ENCODE measurements at regions of chr2 and their contacts with region 1.

Region 1: DNA sequence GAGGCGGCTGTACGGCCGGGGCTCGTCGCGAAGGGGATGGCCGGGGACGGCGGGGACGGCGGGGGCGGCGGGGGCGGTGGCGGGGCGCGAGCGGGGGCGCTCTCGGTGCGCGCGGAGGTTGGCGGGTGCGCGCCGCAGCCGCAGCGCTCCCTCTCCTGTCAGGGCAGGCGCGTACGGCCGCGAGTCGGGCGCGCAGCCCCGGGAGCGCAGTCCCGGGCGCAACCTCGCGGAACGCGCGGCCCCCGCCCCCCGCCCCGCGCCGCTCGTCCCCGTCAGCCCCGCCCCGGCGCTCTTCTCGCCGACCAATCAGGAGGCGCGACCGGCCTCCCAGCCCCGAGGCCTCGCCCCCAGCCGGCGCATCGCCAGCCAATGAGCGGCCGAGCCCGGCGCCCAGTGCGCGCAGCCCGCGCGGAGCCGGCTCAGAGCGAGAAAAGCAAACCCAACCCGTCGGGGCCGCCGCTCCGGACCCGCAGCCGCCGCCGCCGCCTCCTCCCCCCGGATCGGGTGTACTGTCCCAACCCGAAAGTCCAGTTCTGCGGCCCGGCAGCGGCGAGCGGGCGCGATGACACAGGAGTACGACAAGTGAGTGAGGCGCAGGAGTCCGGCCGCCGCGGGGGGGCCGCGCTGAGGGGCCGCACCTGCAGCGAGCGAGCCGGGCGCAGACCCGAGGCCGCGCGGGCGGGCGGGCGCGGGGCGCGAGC is at the start of gene GRHL1:
- DNase-seq: peak; percentile 90 to 92
- H3K4me3 ChIP-seq: peak within 1 kb of the TSS; percentile 68 to 93 (median 75)
- H3K27ac ChIP-seq: peak within 1 kb of the TSS; percentile 93 to 94
- H3K4me1 ChIP-seq: peaks cover 0 to 3% of the 10 kb centered on the region in 2 donors
- H3K27me3 ChIP-seq: no peaks in the 10 kb centered on the region
- CTCF ChIP-seq: no peak
- POLR2A ChIP-seq: peak; percentile 28
- total RNA-seq, gene GRHL1: 2.1 to 86.3 (median 40.0) TPM

Region 2: GRCh38 chr2:9813312-9814133 is 137.9 kb before region 1 on chr2:
- intact Hi-C with region 1: loop called (anchors 10 kb)
- DNase-seq: peak in 1 of 2 donors; percentile 69
- H3K4me3 ChIP-seq: peak overlapping the region in 2 of 3 donors; percentile 17 to 48
- H3K27ac ChIP-seq: no peak overlapping the region
- H3K4me1 ChIP-seq: peaks cover 3 to 7% of the 10 kb centered on the region in 2 donors
- H3K27me3 ChIP-seq: no peaks in the 10 kb centered on the region
- CTCF ChIP-seq: peak; percentile 77 to 92 (median 78)
- POLR2A ChIP-seq: no peak